Activated CD4-positive, alpha-beta T cell treated with anti-CD3 and anti-CD28 coated beads for 36 hours (primary cell): ENCODE measurements at regions of chr1 and their contacts with region 1.

Region 1: GRCh38 chr1:221435504-221435904 is 306.4 kb downstream of the DUSP10 start:
- DNase-seq: no peak
- ATAC-seq: no peak
- H3K4me3 Mint-ChIP-seq: no peak overlapping the region
- H3K27ac Mint-ChIP-seq: no peak overlapping the region
- H3K4me1 Mint-ChIP-seq: peaks cover 39% of the 10 kb centered on the region
- H3K27me3 Mint-ChIP-seq: peaks cover 8% of the 10 kb centered on the region

Region 2: DNA sequence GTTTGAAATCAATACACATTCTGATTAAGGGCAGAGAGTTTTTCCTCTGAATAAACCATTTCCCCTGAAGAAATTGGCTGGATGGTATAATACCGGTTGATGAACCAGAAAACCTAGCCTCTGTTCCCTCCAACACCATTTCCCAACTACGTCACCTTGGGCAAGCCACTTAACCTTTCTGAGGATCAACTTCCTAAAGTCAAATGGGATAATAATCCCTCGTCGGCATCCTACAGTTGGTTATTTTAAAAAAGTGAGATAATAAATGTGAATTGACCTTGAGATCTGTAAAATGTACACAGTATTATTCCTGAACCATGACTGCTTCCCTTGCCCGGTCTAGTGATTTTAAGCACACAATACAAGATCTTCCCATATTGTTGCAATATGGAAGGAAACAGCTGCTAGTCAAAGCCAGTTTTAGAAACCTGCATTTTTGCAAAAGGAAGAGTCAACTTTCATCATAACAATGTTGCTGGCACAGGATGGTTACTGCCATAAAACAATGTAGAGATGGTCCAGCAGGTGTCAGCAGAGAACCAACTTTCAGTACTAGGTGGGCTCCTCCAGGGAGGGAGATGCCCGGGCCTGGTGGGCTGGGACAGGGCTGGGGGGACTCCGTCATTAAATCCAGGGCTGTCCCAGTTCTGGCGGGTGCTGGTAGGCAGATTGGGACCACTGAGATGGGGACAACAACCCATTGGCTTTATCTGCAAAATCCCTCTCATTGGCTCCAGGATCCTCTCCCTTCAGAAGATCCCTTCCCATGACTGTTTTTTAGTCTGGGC is 561.4 kb before region 1 on chr1:
- CTCF ChIA-PET with region 1: interaction called, 4 read pairs
- POLR2A ChIA-PET with region 1: no interaction called
- intact Hi-C with region 1: loop called (anchors 1 kb)
- DNase-seq: peak; percentile 47
- ATAC-seq: no peak
- H3K4me3 Mint-ChIP-seq: no peak overlapping the region
- H3K27ac Mint-ChIP-seq: no peak overlapping the region
- H3K4me1 Mint-ChIP-seq: peaks cover 23% of the 10 kb centered on the region
- H3K27me3 Mint-ChIP-seq: peaks cover 68% of the 10 kb centered on the region

Region 3: GRCh38 chr1:221708987-221709386 is 273.5 kb after region 1 on chr1:
- CTCF ChIA-PET with region 1: no interaction called
- POLR2A ChIA-PET with region 1: no interaction called
- intact Hi-C with region 1: loop called (anchors 1 to 2 kb)
- DNase-seq: peak; percentile 47
- ATAC-seq: no peak
- H3K4me3 Mint-ChIP-seq: no peak overlapping the region
- H3K27ac Mint-ChIP-seq: peak overlapping the region; percentile 83
- H3K4me1 Mint-ChIP-seq: peaks cover 58% of the 10 kb centered on the region
- H3K27me3 Mint-ChIP-seq: no peaks in the 10 kb centered on the region

Region 4: GRCh38 chr1:221777431-221778072 is 342.0 kb after region 1 on chr1:
- CTCF ChIA-PET with region 1: no interaction called
- POLR2A ChIA-PET with region 1: no interaction called
- intact Hi-C with region 1: loop called (anchors 1 kb)
- DNase-seq: peak; percentile 62
- ATAC-seq: peak; percentile 76
- H3K4me3 Mint-ChIP-seq: peak overlapping the region; percentile 11
- H3K27ac Mint-ChIP-seq: peak overlapping the region; percentile 87
- H3K4me1 Mint-ChIP-seq: peaks cover 63% of the 10 kb centered on the region
- H3K27me3 Mint-ChIP-seq: no peaks in the 10 kb centered on the region

Region 5: GRCh38 chr1:221994274-221994698 is 558.8 kb after region 1 on chr1:
- CTCF ChIA-PET with region 1: no interaction called
- POLR2A ChIA-PET with region 1: no interaction called
- intact Hi-C with region 1: loop called in 1 of 2 experiments (anchors 2 kb)
- DNase-seq: peak; percentile 50
- ATAC-seq: peak; percentile 81
- H3K4me3 Mint-ChIP-seq: no peak overlapping the region
- H3K27ac Mint-ChIP-seq: peak overlapping the region; percentile 89
- H3K4me1 Mint-ChIP-seq: peaks cover 32% of the 10 kb centered on the region
- H3K27me3 Mint-ChIP-seq: no peaks in the 10 kb centered on the region